ENCODE measurements at regions of chr2 and their contacts with region 1.

Region 1: DNA sequence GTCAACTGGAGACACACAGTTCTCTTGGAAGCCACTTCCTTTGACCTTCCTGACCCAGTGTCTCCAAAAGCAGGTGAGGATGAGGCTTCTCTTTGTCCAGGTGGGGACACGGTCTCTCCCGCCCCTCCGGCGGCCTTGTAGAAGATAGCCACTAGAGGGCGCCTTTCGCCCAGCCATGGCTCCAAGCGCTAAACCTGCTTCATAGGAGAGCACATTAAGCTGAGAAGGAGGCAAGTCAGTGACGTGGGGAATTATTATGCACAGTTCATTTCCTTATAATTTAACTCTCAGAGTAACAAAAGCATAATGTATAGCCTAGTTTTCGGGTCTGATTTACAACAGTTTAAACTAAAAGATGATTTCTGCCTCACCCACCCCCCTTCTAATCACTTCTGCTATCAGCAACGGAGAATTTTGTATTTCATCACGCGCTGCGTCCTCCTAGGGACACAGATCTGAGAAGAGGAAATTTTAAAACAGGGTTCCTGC is 208.7 kb downstream of the ICOS start:
- DNase-seq: peak; percentile 87
- ATAC-seq: peak; percentile 99
- H3K4me3 ChIP-seq: peak overlapping the region; percentile 68
- H3K27ac ChIP-seq: no peak overlapping the region
- H3K4me1 ChIP-seq: no peaks in the 10 kb centered on the region
- H3K27me3 ChIP-seq: peaks cover 64% of the 10 kb centered on the region
- CTCF ChIP-seq: peak; percentile 98

Region 2: DNA sequence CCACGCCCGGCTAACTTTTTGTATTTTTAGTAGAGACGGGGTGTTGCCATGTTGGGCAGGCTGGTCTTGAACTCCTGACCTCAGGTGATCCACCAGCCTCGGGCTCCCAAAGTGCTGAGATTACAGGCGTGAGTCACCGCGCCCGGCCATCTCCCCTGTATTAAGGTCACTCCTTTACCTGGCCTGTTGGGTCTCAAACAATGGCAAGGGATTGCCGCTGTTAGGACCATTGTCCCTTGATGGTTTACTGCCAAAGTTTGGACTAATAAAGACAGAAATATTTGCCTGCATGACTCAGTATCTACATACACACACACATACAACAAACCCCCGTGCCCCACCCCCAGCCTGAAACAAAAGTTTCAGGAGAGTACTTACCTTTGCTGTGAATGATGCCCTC is 416.4 kb after region 1 on chr2:
- CTCF ChIA-PET with region 1: no interaction called
- POLR2A ChIA-PET with region 1: no interaction called
- intact Hi-C with region 1: no loop called
- DNase-seq: peak; percentile 89
- ATAC-seq: peak; percentile 94
- H3K4me3 ChIP-seq: no peak overlapping the region
- H3K27ac ChIP-seq: 0 out of 2 replicates have a peak overlapping the region, but pooled peaks have one; percentile 2
- H3K4me1 ChIP-seq: peaks cover 13% of the 10 kb centered on the region
- H3K27me3 ChIP-seq: no peaks in the 10 kb centered on the region
- CTCF ChIP-seq: no peak

Region 3: DNA sequence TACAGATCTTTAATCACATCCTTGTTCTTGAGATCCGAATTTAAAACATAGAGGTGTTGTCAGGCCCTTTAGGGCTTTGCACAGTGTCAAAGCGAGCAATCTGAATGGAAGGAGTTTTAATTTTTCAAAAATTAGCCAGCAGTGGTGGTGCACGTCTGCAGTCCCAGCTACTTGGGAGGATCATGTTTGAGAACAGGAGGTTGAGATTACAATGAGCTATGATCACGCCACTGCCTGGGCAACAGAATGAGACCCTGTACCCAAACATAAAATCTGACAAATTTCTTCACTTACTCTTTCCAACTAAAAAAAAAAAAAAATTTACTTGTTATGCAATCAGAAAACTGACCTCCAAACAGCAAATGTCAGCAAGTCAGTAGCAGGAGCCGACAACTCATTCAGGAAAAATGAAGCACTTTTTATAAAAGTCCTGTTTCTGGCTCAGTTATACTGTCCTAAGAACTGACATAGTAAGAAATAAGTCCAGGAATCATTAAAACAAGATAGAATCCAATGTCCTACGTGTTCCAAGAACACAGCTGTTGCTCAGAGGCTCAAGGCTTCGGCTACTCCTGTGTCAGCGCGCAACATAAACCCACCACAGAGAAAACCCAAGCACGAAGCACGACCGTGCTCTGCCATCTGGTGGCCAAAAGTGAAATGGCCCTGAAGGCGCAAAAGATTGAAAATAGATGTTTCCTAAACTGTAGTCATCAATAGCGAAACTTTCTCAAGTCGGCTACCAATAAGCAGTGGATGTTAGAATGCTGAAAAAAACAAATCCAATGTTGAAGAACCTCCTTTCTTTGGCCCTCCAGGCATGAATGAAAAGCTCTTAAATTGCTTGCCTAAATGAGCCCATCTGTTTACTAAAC is 1802.6 kb after region 1 on chr2:
- CTCF ChIA-PET with region 1: no interaction called
- POLR2A ChIA-PET with region 1: no interaction called
- intact Hi-C with region 1: loop called (anchors 1 kb)
- DNase-seq: peak; percentile 70
- ATAC-seq: peak; percentile 73
- H3K4me3 ChIP-seq: 0 out of 2 replicates have a peak overlapping the region, but pooled peaks have one; percentile 3
- H3K27ac ChIP-seq: no peak overlapping the region
- H3K4me1 ChIP-seq: no peaks in the 10 kb centered on the region
- H3K27me3 ChIP-seq: no peaks in the 10 kb centered on the region
- CTCF ChIP-seq: peak; percentile 96